ENCODE measurements at regions of chr3 and their contacts with region 1.

Region 1: GRCh38 chr3:123584988-123585937 is at the start of gene HACD2:
- DNase-seq: peak; percentile 96
- H3K4me3 Mint-ChIP-seq: no peak within 1 kb of the TSS
- H3K27ac Mint-ChIP-seq: peak within 1 kb of the TSS; percentile 65
- H3K4me1 Mint-ChIP-seq: peaks cover 18% of the 10 kb centered on the region
- H3K27me3 Mint-ChIP-seq: no peaks in the 10 kb centered on the region
- total RNA-seq, gene HACD2: 27.0 to 27.9 TPM

Region 2: GRCh38 chr3:121749276-121750086 is 1835.8 kb before region 1 on chr3 and contains the start of gene GOLGB1:
- CTCF ChIA-PET with region 1: no interaction called
- POLR2A ChIA-PET with region 1: no interaction called
- intact Hi-C with region 1: loop called (anchors 2 kb)
- DNase-seq: peak; percentile 97
- H3K4me3 Mint-ChIP-seq: no peak within 1 kb of the TSS
- H3K27ac Mint-ChIP-seq: no peak within 1 kb of the TSS
- H3K4me1 Mint-ChIP-seq: peaks cover 10% of the 10 kb centered on the region
- H3K27me3 Mint-ChIP-seq: no peaks in the 10 kb centered on the region
- total RNA-seq, gene GOLGB1: 22.7 to 26.0 TPM

Region 3: DNA sequence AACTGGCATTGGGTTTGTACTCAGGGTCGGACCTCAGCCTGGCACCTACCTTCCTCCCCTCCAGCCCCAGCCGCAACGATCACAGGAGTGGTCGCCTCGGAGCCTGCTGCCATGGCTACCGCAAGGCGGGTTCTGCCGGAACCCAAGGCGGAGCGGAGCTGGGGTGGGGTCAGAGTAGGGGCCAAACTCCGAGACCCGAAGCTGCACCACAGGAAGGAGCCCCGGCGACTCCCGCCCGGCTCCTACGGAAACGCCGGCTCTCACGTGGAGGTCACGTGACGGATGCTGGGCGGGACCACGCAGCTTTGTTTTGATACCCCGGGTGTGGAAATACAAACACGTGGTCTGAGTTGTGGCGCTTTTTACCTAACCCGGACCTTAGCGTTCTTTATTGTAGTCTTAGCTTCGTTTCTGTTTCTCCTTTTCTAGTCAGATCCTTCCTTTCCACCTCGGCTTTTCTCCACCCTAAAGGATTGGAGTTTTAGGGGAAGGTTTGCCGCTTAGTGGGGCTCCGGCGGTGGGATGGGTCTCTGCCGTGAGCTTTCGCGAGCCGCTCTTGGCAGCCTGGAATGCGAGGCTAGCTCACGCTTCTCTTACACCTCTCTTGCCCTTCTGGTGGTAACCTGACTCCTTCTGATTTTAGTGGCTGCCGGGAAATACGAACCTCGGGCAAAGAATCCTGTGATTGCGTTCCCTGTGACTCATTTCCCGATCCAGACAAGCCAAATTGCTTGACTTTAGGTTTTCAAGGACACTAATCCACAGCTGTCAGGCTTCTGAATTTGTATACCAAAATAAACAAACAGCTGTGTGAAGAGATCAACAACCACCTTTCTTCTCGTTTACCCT is 791.5 kb before region 1 on chr3 and contains the start of gene HSPBAP1:
- CTCF ChIA-PET with region 1: no interaction called
- POLR2A ChIA-PET with region 1: no interaction called
- intact Hi-C with region 1: loop called (anchors 10 kb)
- DNase-seq: peak; percentile 93
- H3K4me3 Mint-ChIP-seq: peak within 1 kb of the TSS; percentile 85
- H3K27ac Mint-ChIP-seq: peak within 1 kb of the TSS; percentile 82
- H3K4me1 Mint-ChIP-seq: peaks cover 29% of the 10 kb centered on the region
- H3K27me3 Mint-ChIP-seq: no peaks in the 10 kb centered on the region
- total RNA-seq, gene HSPBAP1: 4.8 TPM

Region 4: DNA sequence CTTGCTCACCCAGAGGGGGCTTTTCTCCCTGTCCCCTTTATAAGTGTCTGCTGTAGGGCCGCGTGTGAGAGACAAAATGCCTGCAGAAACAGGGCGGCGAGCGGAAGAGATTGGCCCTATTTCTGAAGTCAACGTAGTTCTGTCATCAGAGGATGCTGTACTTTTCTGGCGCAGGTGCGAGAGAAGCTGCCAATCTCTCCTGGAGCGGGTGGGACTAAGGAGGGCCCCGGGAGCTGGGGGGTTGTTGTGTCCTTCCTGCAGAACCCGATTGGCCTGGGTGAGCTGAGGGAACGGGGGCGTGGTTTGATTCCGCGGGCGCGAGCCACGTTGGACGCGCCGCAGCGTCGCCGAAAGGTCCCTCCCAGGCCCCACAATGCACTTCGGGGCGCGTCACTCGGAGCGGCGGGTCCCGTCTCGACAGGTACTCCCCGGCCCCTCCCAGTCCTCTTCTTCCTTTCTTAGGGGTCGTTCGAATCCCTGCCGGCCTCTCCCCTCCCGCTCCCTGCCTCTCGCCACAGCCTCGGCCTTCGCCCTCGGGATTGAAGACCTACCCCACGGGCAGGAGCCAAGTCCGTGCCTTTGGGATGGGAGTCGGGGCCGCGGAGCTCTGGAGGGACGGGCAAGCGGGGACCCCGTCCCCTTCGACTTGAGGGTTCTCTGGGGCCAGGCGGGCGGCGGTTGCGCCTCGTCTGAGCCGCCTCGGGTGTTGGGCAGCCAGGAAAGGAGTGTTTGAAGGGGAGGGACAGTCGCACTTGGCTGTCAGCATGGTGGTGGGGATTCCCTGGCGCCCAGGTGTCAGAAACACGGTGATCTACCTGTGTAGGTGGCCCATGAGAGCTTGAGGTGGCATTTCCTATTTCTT is 383.5 kb before region 1 on chr3 and contains the start of gene SEC22A:
- CTCF ChIA-PET with region 1: no interaction called
- POLR2A ChIA-PET with region 1: no interaction called
- intact Hi-C with region 1: loop called (anchors 1 kb)
- DNase-seq: peak; percentile 97
- H3K4me3 Mint-ChIP-seq: peak within 1 kb of the TSS; percentile 87
- H3K27ac Mint-ChIP-seq: peak within 1 kb of the TSS; percentile 86
- H3K4me1 Mint-ChIP-seq: peaks cover 23% of the 10 kb centered on the region
- H3K27me3 Mint-ChIP-seq: no peaks in the 10 kb centered on the region
- total RNA-seq, gene SEC22A: 19.6 to 21.5 TPM

Region 5: DNA sequence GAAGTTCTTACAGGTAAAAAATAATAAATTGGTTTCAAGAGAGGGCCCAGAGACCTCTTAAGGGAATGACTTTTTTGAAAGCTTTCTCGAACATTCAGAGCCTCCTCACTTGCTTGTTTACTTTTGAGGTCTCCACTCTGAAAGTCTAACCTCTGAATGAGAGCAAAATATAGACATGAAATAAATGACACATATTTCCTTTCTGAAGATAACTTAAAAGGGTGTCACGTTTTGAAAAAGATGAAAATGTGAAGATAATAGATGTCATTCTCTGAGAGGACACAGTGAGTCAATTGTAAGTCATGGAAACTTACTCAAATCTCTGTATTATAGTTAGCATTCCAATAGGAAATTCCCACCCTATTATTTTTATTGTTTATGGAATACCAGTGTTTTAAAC is 45.0 kb before region 1 on chr3:
- CTCF ChIA-PET with region 1: no interaction called
- POLR2A ChIA-PET with region 1: no interaction called
- intact Hi-C with region 1: loop called (anchors 2 kb)
- DNase-seq: no peak
- H3K4me3 Mint-ChIP-seq: no peak overlapping the region
- H3K27ac Mint-ChIP-seq: peak overlapping the region; percentile 62
- H3K4me1 Mint-ChIP-seq: peaks cover 19% of the 10 kb centered on the region
- H3K27me3 Mint-ChIP-seq: no peaks in the 10 kb centered on the region

Region 6: DNA sequence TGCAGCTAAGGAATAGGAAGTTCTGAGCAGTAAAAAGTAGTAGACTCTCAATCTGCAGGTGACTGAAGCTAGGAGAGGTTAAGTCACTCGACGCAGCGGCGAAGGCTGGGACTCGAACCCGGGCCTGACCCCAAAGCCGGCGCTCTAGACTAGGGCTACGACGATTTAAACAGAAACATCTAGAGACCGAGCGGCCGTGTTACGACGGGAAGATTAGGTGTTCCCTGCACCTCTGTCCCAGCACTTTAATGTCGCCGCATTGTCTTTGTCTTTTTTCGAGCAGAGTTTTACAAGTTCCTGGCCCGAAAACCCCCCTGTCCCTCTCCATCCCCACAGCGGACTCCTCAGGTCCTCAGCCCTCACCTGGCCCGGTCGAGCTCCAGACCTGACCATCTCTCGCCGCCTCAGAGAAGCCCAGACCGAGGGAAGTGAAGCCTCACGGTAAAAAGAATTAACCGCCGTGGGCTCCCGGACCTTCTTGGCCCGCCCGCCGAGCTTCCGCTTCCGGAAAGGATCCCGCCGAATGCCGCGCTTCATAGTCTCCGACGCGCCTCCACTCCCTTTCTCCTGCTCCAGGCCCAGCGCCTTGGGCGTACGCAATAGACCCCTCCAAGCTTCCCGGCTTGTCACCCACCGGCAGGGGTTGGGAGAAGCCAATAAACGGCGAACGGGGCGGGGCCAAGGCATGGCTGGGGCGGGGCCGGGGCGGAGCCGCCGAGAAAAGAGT is 375.7 kb after region 1 on chr3 and contains the start of gene CCDC14:
- CTCF ChIA-PET with region 1: no interaction called
- POLR2A ChIA-PET with region 1: no interaction called
- intact Hi-C with region 1: loop called (anchors 1 kb)
- DNase-seq: peak; percentile 88
- H3K4me3 Mint-ChIP-seq: peak within 1 kb of the TSS; percentile 97
- H3K27ac Mint-ChIP-seq: peak within 1 kb of the TSS; percentile 82
- H3K4me1 Mint-ChIP-seq: peaks cover 25% of the 10 kb centered on the region
- H3K27me3 Mint-ChIP-seq: peaks cover 4% of the 10 kb centered on the region
- total RNA-seq, gene CCDC14: 32.4 to 39.5 TPM